ENCODE measurements at regions of chr11 and their contacts with region 1.

Region 1: DNA sequence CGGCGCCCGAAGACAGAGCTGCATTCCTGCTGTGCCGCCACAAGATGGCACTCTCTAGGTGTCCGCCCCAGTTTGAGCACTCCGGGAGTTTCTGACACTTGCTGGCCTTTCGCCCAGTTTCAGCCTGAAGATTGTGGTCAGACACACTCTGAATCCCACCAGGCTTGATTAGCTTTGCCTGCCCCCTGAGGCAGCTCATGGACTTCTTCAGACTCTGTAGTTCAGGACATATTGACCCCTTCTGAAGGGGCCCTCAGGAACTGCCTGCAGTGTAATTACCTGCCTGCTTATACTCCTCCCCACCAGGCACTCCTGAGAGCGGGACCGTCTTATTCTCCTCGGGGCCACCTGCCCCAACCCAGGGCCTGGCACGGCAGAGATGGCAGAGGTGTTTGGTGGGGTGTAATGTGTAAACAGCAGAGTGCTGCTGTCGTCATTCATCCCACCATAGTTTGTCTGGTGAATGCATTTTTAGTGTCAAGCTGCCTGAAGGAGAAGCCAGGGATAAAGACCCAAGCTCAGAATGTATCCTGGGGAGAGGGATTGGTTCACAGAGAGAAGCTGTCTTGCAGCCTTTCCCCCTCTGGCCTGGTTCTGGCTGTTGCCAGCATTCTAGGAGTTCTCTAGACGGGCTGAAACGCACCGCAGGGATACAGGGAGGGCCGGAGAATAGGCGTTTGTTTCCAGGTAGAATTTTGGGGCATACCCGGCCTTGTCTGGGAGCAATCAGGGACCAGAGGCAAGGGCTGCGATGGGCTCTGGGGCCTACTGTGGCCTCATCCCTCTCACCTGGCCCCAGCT is 46.4 kb downstream of the EIF3F start:
- DNase-seq: peak; percentile 91
- H3K4me3 ChIP-seq: no peak overlapping the region
- H3K27ac ChIP-seq: peak overlapping the region in 1 of 2 experiments; percentile 31; a peak in 1 of 4 replicates
- H3K4me1 ChIP-seq: peaks cover 0 to 46% of the 10 kb centered on the region in 2 experiments; a peak in 1 of 4 replicates
- H3K27me3 ChIP-seq: no peaks in the 10 kb centered on the region
- CTCF ChIP-seq: peak; percentile 88
- EP300 ChIP-seq: no peak
- RAD21 ChIP-seq: peak; percentile 95

Region 2: GRCh38 chr11:8011981-8012444 is 21.5 kb before region 1 on chr11:
- CTCF ChIA-PET with region 1: interaction called, 33 read pairs
- POLR2A ChIA-PET with region 1: no interaction called
- DNase-seq: no peak
- H3K4me3 ChIP-seq: no peak overlapping the region
- H3K27ac ChIP-seq: peak overlapping the region in 1 of 2 experiments; percentile 74; a peak in 2 of 4 replicates
- H3K4me1 ChIP-seq: peaks cover 0 to 17% of the 10 kb centered on the region in 2 experiments; a peak in 2 of 4 replicates
- H3K27me3 ChIP-seq: no peaks in the 10 kb centered on the region
- CTCF ChIP-seq: no peak
- EP300 ChIP-seq: peak in 1 of 2 experiments; percentile 89; a peak in 2 of 4 replicates
- RAD21 ChIP-seq: no peak

Region 3: GRCh38 chr11:8047382-8047781 is 13.9 kb after region 1 on chr11:
- CTCF ChIA-PET with region 1: interaction called, 22 read pairs
- POLR2A ChIA-PET with region 1: no interaction called
- DNase-seq: no peak
- H3K4me3 ChIP-seq: no peak overlapping the region
- H3K27ac ChIP-seq: no peak overlapping the region
- H3K4me1 ChIP-seq: no peaks in the 10 kb centered on the region; a peak in 1 of 4 replicates
- H3K27me3 ChIP-seq: no peaks in the 10 kb centered on the region
- CTCF ChIP-seq: no peak
- EP300 ChIP-seq: no peak
- RAD21 ChIP-seq: no peak

Region 4: GRCh38 chr11:8070417-8071115 is 37.1 kb after region 1 on chr11:
- CTCF ChIA-PET with region 1: interaction called, 230 read pairs
- POLR2A ChIA-PET with region 1: interaction called, 27 read pairs
- DNase-seq: peak; percentile 73
- H3K4me3 ChIP-seq: no peak overlapping the region
- H3K27ac ChIP-seq: peak overlapping the region in 1 of 2 experiments; percentile 99; a peak in 2 of 4 replicates
- H3K4me1 ChIP-seq: peaks cover 17 to 50% of the 10 kb centered on the region in 2 experiments
- H3K27me3 ChIP-seq: no peaks in the 10 kb centered on the region; the same call in 1 of the 2 replicates
- CTCF ChIP-seq: peak; percentile 59
- EP300 ChIP-seq: no peak
- RAD21 ChIP-seq: peak; percentile 87

Region 5: GRCh38 chr11:8087185-8087584 is 53.7 kb after region 1 on chr11:
- CTCF ChIA-PET with region 1: interaction called, 620 read pairs
- POLR2A ChIA-PET with region 1: interaction called, 13 read pairs
- DNase-seq: no peak
- H3K4me3 ChIP-seq: no peak overlapping the region
- H3K27ac ChIP-seq: peak overlapping the region in 1 of 2 experiments; percentile 92; a peak in 2 of 4 replicates
- H3K4me1 ChIP-seq: peaks cover 12 to 92% of the 10 kb centered on the region in 2 experiments; a peak in 3 of 4 replicates
- H3K27me3 ChIP-seq: no peaks in the 10 kb centered on the region
- CTCF ChIP-seq: peak; percentile 38; the same call in 1 of the 2 replicates
- EP300 ChIP-seq: no peak
- RAD21 ChIP-seq: peak; percentile 47

Region 6: DNA sequence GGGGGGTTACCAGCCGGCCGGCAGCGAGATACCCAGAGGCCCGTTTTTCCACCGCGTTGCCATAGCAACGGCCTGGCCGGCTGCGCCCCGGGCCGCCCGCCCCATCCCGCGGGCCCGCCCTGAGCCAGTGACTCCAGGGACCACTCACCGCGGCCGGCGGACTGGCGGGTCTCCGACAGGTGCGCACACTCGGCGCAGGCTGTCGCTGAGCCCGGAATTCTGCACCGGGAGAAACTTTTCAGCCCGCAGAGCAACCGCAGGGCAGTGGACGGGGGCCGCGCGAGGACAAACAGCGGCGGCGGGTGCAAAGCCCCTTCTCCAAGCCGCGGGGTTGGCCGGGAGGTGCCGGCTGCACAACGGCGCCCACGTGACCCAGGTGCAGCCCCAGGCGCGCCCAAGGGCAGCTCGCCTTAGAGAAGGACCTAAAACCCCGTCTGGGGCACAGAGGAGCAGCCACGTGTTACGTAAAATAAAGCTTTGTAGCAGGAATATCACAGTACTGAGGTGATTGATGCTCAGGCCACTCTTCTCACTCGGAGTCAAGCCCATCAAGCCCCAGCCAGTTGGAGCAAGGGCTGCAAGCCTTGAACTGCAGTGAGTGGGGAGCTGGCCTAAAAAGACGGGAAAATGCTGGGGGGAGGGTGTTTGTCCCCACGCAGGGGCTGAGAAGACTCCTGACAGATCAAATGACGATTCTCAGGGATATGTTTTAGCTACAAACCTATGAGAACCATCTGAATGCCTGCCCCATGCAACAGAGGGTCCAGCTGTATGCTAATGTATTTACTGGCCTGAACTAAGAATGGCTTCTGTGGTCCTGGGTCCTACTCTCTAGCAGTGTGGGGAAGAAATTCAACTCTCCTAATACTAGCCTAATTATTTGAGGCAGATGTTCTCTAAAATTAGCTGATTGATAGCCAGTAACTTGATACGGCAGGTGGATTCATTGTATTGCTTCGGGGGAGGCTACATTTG is 560.7 kb after region 1 on chr11 and contains the start of gene STK33:
- CTCF ChIA-PET with region 1: no interaction called
- POLR2A ChIA-PET with region 1: no interaction called
- DNase-seq: peak; percentile 85
- H3K4me3 ChIP-seq: peak within 1 kb of the TSS; percentile 78 to 82
- H3K27ac ChIP-seq: no peak within 1 kb of the TSS
- H3K4me1 ChIP-seq: peaks cover 0 to 5% of the 10 kb centered on the region in 2 experiments; a peak in 1 of 4 replicates
- H3K27me3 ChIP-seq: no peaks in the 10 kb centered on the region
- CTCF ChIP-seq: no peak
- EP300 ChIP-seq: no peak
- RAD21 ChIP-seq: no peak
- polyA plus RNA-seq, gene STK33: 12.3 and 16.6 TPM in 2 replicates